Endothelial cell of umbilical vein (primary cell): ENCODE measurements at regions of chr4 and their contacts with region 1.

Region 1: DNA sequence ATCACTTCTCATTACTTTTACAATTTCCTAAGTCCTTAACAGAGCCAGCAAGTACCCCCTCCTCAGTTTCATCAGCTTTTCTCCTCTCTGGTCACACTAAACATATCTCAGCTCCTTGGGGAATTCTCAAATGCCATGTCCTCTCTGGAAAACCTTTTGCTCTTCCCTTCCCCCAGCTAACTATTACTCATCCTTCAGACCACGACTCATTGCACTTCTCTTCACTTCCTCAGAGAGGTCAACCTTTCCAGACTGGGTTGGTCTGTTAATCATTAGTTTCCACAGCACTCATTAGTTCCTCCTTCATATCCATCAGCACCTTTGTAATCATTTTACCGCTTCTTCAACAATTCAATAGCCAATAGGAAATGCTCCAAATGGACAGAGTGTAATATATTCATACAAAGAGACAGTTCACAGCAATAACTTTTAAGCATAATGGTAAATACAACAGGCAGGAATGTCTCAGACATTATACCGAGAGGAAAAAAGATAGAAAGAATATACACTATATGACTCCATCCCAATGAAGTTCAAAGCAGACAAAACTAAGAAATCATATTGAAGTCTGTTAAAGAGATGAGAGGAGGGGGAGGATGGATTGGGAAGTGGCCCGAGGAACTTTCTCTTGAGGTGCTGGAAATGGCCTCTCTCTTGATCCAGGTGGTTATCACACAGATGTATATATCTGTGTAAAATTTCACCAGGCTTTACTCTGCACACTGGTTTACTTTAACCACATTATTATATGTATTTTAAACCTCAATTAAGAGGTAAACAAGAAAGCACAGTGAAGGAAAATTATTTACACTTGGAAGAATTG is 39.6 kb downstream of the DDX60L start:
- DNase-seq: peak; percentile 85
- H3K4me3 ChIP-seq: no peak overlapping the region
- H3K27ac ChIP-seq: peak overlapping the region; percentile 61
- H3K4me1 ChIP-seq: peaks cover 19% of the 10 kb centered on the region
- H3K27me3 ChIP-seq: no peaks in the 10 kb centered on the region
- CTCF ChIP-seq: no peak
- POLR2A ChIP-seq: no peak

Region 2: GRCh38 chr4:168421671-168422070 is 19.0 kb before region 1 on chr4:
- CTCF ChIA-PET with region 1: no interaction called
- POLR2A ChIA-PET with region 1: no interaction called
- dilution Hi-C with region 1: no loop called
- intact Hi-C with region 1: no loop called
- DNase-seq: peak; percentile 98
- H3K4me3 ChIP-seq: no peak overlapping the region
- H3K27ac ChIP-seq: peak overlapping the region; percentile 76
- H3K4me1 ChIP-seq: peaks cover 21% of the 10 kb centered on the region
- H3K27me3 ChIP-seq: no peaks in the 10 kb centered on the region
- CTCF ChIP-seq: no peak
- POLR2A ChIP-seq: peak; percentile 69

Region 3: DNA sequence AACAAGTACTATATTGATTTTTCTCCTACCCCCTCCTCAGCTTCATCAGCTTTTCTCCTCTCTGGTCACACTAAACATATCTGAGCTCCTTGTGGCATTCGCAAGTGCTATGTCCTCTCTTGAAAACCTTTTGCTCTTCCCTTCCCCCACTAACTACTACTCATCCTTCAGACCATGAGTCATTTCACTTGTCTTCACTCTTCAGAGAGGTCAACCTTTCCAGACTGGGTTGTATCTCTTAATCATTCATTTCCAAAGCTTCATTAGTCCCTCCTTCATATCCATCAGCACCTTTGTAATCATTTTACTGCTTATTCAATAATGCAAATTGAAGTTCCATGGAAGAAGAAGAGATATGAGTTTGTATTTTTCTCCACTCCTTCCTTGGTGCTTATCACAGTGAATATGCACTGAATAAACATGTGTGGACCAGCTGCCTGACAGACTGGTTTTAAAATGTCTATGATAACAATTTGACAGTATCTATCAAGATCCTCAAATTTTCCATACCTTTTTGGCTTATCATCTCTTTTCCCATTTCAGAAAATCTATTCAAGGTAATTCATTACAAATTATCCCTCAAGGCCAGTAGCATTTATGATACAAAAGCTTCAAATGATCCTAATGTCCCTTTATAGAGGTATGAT is 11.2 kb after region 1 on chr4:
- CTCF ChIA-PET with region 1: no interaction called
- POLR2A ChIA-PET with region 1: no interaction called
- dilution Hi-C with region 1: no loop called
- intact Hi-C with region 1: loop called (anchors 1 kb)
- DNase-seq: peak; percentile 76
- H3K4me3 ChIP-seq: no peak overlapping the region
- H3K27ac ChIP-seq: peak overlapping the region; percentile 61
- H3K4me1 ChIP-seq: peaks cover 22% of the 10 kb centered on the region
- H3K27me3 ChIP-seq: no peaks in the 10 kb centered on the region
- CTCF ChIP-seq: no peak
- POLR2A ChIP-seq: no peak